ENCODE measurements at regions of chr11 and their contacts with region 1.

Region 1: DNA sequence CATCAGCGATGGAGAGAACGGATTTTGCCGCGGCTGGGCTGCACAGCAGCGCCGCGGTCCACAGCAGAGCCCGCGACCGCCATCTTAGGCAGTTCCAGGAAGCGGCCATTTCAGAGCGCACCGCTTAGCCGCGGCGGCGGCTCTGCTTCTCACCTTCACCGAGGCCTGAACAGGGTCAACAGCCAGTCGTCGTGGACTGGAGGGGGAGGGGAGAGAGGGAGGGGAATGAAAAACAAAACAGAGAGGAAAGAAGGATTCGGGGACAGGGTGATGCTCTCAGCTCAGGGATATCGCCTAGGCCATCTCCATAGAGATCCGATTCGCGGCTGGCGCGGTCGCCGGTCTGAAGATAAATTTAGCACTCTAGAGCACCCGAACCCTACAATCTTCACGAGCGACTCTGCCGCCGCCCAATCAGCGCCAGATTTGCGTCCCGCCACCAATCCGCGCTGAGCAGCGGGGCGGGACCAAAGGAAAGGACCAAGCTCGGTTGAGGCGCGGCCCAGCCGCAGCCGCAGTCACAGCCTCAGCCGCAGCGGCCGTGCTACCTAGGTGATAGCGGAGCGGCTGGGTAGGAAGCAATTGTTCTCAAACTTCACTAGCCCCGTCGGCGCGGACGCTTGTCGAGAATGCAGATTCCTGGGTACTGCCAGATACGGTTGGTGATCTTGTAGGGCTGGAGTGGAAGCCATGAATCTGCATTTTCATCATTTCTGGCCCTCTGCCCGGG is at the start of gene ZBED5:
- DNase-seq: peak; percentile 97
- ATAC-seq: peak; percentile 95
- H3K4me3 ChIP-seq: peak within 1 kb of the TSS; percentile 67
- H3K27ac ChIP-seq: peak within 1 kb of the TSS; percentile 95
- H3K4me1 ChIP-seq: no peaks in the 10 kb centered on the region
- H3K27me3 ChIP-seq: no peaks in the 10 kb centered on the region
- CTCF ChIP-seq: 0 out of 2 replicates have a peak, but pooled peaks have one; percentile 7
- POLR2A ChIP-seq: peak; percentile 92
- RAD21 ChIP-seq: peak; percentile 31
- total RNA-seq, gene ZBED5: 30.8 and 35.6 TPM in 2 replicates

Region 2: GRCh38 chr11:10818594-10818993 is 39.3 kb before region 1 on chr11:
- CTCF ChIA-PET with region 1: no interaction called
- POLR2A ChIA-PET with region 1: interaction called, 4 read pairs
- dilution Hi-C with region 1: no loop called
- in situ Hi-C with region 1: loop called (anchors 5 kb)
- intact Hi-C with region 1: loop called (anchors 1 kb)
- DNase-seq: peak; percentile 95
- ATAC-seq: peak; percentile 98
- H3K4me3 ChIP-seq: no peak overlapping the region
- H3K27ac ChIP-seq: peak overlapping the region; percentile 76
- H3K4me1 ChIP-seq: no peaks in the 10 kb centered on the region
- H3K27me3 ChIP-seq: no peaks in the 10 kb centered on the region
- CTCF ChIP-seq: no peak
- POLR2A ChIP-seq: no peak
- RAD21 ChIP-seq: no peak

Region 3: GRCh38 chr11:10899121-10899830 is 41.4 kb after region 1 on chr11:
- CTCF ChIA-PET with region 1: no interaction called
- POLR2A ChIA-PET with region 1: no interaction called
- dilution Hi-C with region 1: no loop called
- in situ Hi-C with region 1: no loop called
- intact Hi-C with region 1: loop called (anchors 1 kb)
- DNase-seq: no peak
- ATAC-seq: peak; percentile 61
- H3K4me3 ChIP-seq: no peak overlapping the region
- H3K27ac ChIP-seq: peak overlapping the region; percentile 92
- H3K4me1 ChIP-seq: peaks cover 31% of the 10 kb centered on the region
- H3K27me3 ChIP-seq: no peaks in the 10 kb centered on the region
- CTCF ChIP-seq: no peak
- POLR2A ChIP-seq: no peak
- RAD21 ChIP-seq: no peak

Region 4: DNA sequence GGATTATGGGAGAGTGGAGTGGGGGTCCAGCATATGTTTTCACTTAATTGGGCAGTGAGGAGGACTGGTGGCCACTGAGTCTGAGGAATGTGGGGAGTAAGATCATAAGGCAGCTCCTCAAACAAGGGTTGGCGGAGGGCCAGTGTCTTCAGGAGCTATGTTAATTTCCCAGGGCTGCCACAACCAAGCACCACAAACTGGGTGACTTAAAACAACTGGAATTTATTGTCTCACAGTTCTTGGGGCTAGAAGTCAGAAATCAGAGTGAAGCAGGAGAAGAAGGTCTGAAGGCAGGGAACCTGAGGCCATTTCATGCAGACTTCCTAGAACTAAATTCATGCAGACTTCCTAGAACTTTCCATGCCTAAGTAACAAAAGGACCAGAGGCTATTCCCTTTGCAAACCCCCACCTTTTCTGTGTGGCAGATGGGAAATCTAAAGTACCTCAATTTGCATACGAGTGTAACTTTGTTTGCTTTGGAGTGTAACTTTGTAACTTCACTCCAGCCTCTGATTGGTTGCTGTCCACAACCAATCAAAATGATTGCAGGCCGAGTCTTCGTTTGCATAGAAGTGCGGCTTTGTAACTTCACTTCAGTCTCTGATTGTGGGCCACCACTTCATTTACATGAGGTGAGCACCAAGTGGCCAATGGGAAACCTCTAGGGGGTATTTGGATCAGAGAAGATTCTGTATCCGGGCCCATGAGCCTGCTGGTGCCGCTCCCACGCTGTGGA is 50.5 kb after region 1 on chr11:
- CTCF ChIA-PET with region 1: no interaction called
- POLR2A ChIA-PET with region 1: no interaction called
- dilution Hi-C with region 1: no loop called
- in situ Hi-C with region 1: no loop called
- intact Hi-C with region 1: loop called (anchors 2 kb)
- DNase-seq: peak; percentile 93
- ATAC-seq: peak; percentile 71
- H3K4me3 ChIP-seq: no peak overlapping the region
- H3K27ac ChIP-seq: peak overlapping the region; percentile 54; the same call in 1 of the 2 replicates
- H3K4me1 ChIP-seq: peaks cover 17% of the 10 kb centered on the region
- H3K27me3 ChIP-seq: no peaks in the 10 kb centered on the region
- CTCF ChIP-seq: no peak
- POLR2A ChIP-seq: no peak
- RAD21 ChIP-seq: no peak

Region 5: GRCh38 chr11:11022125-11022730 is 164.4 kb after region 1 on chr11:
- CTCF ChIA-PET with region 1: no interaction called
- POLR2A ChIA-PET with region 1: no interaction called
- dilution Hi-C with region 1: no loop called
- in situ Hi-C with region 1: no loop called
- intact Hi-C with region 1: loop called (anchors 5 kb)
- DNase-seq: peak; percentile 24
- ATAC-seq: peak; percentile 55; the same call in 1 of the 2 replicates
- H3K4me3 ChIP-seq: no peak overlapping the region
- H3K27ac ChIP-seq: no peak overlapping the region
- H3K4me1 ChIP-seq: peaks cover 1% of the 10 kb centered on the region; the same call in 1 of the 2 replicates
- H3K27me3 ChIP-seq: peaks cover 19% of the 10 kb centered on the region
- CTCF ChIP-seq: peak; percentile 62
- POLR2A ChIP-seq: no peak
- RAD21 ChIP-seq: peak; percentile 48

Measured in IMR-90 (cell line).